Colonic mucosa (tissue), 4 donors: ENCODE measurements at regions of chr6 and their contacts with region 1.

Region 1: GRCh38 chr6:8131256-8131897 is 29.0 kb upstream of the EEF1E1 start:
- DNase-seq: peak; percentile 45
- H3K4me3 ChIP-seq: no peak overlapping the region
- H3K27ac ChIP-seq: no peak overlapping the region
- H3K4me1 ChIP-seq: no peaks in the 10 kb centered on the region
- H3K27me3 ChIP-seq: no peaks in the 10 kb centered on the region
- CTCF ChIP-seq: peak; percentile 37

Region 2: GRCh38 chr6:8219352-8219943 is 88.1 kb after region 1 on chr6:
- intact Hi-C with region 1: loop called (anchors 2 kb)
- DNase-seq: peak; percentile 30
- H3K4me3 ChIP-seq: no peak overlapping the region
- H3K27ac ChIP-seq: no peak overlapping the region
- H3K4me1 ChIP-seq: no peaks in the 10 kb centered on the region
- H3K27me3 ChIP-seq: no peaks in the 10 kb centered on the region
- CTCF ChIP-seq: peak; percentile 72